ENCODE measurements at regions of chr20 and their contacts with region 1.

Region 1: DNA sequence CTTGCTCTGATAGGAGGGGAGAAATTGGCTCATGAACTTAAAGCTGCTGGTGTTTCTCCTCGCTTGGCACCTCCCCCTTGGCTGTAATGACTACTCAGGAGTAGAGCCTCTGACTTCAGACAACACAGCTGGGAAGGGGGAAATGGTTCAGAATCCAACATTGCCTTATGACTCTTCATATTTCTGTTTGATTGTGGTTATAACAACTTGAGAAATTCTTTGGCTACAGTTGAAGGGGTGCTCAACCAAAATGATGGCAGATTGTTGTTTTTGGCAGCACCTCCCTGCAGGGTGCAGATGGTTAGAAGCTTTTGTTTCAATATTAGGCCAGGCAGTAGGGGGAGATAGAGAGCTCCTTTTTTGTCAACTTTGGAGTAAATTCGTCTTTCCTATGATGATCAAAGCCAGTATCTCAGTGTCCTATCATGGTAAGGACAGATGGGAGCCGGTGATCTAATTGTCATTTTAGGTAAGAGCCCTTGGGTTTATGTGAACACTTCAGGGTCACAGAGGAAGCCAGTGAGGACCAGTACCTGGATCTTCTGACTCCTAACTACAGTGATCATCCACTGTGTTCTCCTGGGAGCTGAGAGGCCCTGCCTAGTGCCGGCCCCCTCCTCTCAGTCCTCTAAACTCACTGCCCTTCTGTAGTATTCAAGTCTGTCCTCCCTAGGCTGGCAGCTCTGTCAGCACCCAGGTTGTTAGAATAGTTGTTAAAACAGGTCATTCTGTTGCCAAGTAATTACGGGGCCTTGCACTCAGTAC is 39.9 kb downstream of the RPRD1B start:
- DNase-seq: peak in 1 of 2 experiments; percentile 85
- H3K4me3 ChIP-seq: no peak overlapping the region
- H3K4me3 Mint-ChIP-seq: no peak overlapping the region
- H3K27ac Mint-ChIP-seq: no peak overlapping the region
- H3K4me1 ChIP-seq: peaks cover 4% of the 10 kb centered on the region; the same call in 1 of the 2 replicates
- H3K4me1 Mint-ChIP-seq: peaks cover 13% of the 10 kb centered on the region
- H3K27me3 ChIP-seq: no peaks in the 10 kb centered on the region
- H3K27me3 Mint-ChIP-seq: no peaks in the 10 kb centered on the region
- CTCF ChIP-seq: peak; percentile 95 to 98

Region 2: GRCh38 chr20:38023181-38024001 is 50.1 kb before region 1 on chr20:
- CTCF ChIA-PET with region 1: no interaction called
- POLR2A ChIA-PET with region 1: no interaction called
- intact Hi-C with region 1: no loop called
- DNase-seq: no peak
- H3K4me3 ChIP-seq: no peak overlapping the region
- H3K4me3 Mint-ChIP-seq: no peak overlapping the region
- H3K27ac Mint-ChIP-seq: no peak overlapping the region
- H3K4me1 ChIP-seq: no peaks in the 10 kb centered on the region
- H3K4me1 Mint-ChIP-seq: no peaks in the 10 kb centered on the region
- H3K27me3 ChIP-seq: no peaks in the 10 kb centered on the region
- H3K27me3 Mint-ChIP-seq: no peaks in the 10 kb centered on the region
- CTCF ChIP-seq: no peak

Region 3: DNA sequence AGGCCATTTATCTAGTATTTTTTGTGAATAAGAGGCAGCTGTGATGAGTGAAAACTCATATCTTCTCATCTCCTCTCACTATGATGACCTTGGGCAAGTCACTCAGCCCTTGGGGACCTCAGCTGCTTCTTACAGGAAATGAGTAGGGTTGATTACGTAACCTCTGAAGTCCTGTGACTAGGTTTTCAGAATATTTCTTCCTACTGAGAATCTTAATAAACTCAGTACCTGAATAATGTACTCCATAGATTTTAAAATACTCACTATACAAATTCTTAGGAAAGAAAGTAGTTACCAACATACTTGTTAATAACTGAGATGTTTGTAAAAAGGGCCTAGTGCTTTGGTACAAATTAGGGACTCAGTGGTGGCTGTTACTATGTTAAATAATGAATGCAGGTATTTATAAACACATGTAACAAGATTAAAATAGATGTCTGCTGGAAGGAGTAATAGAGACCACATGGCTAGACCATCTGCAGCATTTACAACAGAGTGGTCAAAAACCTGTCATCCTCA is 20.9 kb after region 1 on chr20:
- CTCF ChIA-PET with region 1: interaction called, 24 read pairs
- POLR2A ChIA-PET with region 1: interaction called, 5 read pairs
- intact Hi-C with region 1: no loop called
- DNase-seq: no peak
- H3K4me3 ChIP-seq: no peak overlapping the region
- H3K4me3 Mint-ChIP-seq: no peak overlapping the region
- H3K27ac Mint-ChIP-seq: peak overlapping the region; percentile 20
- H3K4me1 ChIP-seq: peaks cover 8% of the 10 kb centered on the region; the same call in 1 of the 2 replicates
- H3K4me1 Mint-ChIP-seq: peaks cover 8% of the 10 kb centered on the region
- H3K27me3 ChIP-seq: no peaks in the 10 kb centered on the region
- H3K27me3 Mint-ChIP-seq: no peaks in the 10 kb centered on the region
- CTCF ChIP-seq: no peak

Region 4: GRCh38 chr20:38123021-38123587 is 49.6 kb after region 1 on chr20:
- CTCF ChIA-PET with region 1: interaction called, 21 read pairs
- POLR2A ChIA-PET with region 1: no interaction called
- intact Hi-C with region 1: no loop called
- DNase-seq: peak; percentile 96 to 98
- H3K4me3 ChIP-seq: no peak overlapping the region
- H3K4me3 Mint-ChIP-seq: peak overlapping the region; percentile 50
- H3K27ac Mint-ChIP-seq: peak overlapping the region; percentile 99
- H3K4me1 ChIP-seq: peaks cover 34% of the 10 kb centered on the region
- H3K4me1 Mint-ChIP-seq: peaks cover 42% of the 10 kb centered on the region
- H3K27me3 ChIP-seq: no peaks in the 10 kb centered on the region
- H3K27me3 Mint-ChIP-seq: no peaks in the 10 kb centered on the region
- CTCF ChIP-seq: no peak

Region 5: GRCh38 chr20:38165089-38165989 is 91.8 kb after region 1 on chr20 and contains the start of gene TGM2:
- CTCF ChIA-PET with region 1: interaction called, 9 read pairs
- POLR2A ChIA-PET with region 1: no interaction called
- intact Hi-C with region 1: loop called (anchors 1 kb)
- DNase-seq: peak; percentile 94 to 98
- H3K4me3 ChIP-seq: peak within 1 kb of the TSS; percentile 44
- H3K4me3 Mint-ChIP-seq: peak within 1 kb of the TSS; percentile 67
- H3K27ac Mint-ChIP-seq: peak within 1 kb of the TSS; percentile 6
- H3K4me1 ChIP-seq: peaks cover 38% of the 10 kb centered on the region
- H3K4me1 Mint-ChIP-seq: peaks cover 21% of the 10 kb centered on the region
- H3K27me3 ChIP-seq: no peaks in the 10 kb centered on the region
- H3K27me3 Mint-ChIP-seq: no peaks in the 10 kb centered on the region
- CTCF ChIP-seq: peak; percentile 97 to 98
- total RNA-seq, gene TGM2: 138 and 162 TPM in 2 replicates

Region 6: GRCh38 chr20:38321959-38322598 is 248.6 kb after region 1 on chr20:
- CTCF ChIA-PET with region 1: interaction called, 10 read pairs
- POLR2A ChIA-PET with region 1: no interaction called
- intact Hi-C with region 1: no loop called
- DNase-seq: peak in 1 of 2 experiments; percentile 76
- H3K4me3 ChIP-seq: no peak overlapping the region
- H3K4me3 Mint-ChIP-seq: no peak overlapping the region
- H3K27ac Mint-ChIP-seq: no peak overlapping the region
- H3K4me1 ChIP-seq: no peaks in the 10 kb centered on the region
- H3K4me1 Mint-ChIP-seq: peaks cover 5% of the 10 kb centered on the region
- H3K27me3 ChIP-seq: no peaks in the 10 kb centered on the region
- H3K27me3 Mint-ChIP-seq: peaks cover 25% of the 10 kb centered on the region
- CTCF ChIP-seq: peak; percentile 93 to 97

Measured in Caco-2 (cell line).